BJ (cell line): ENCODE measurements at regions of chr1 and their contacts with region 1.

Region 1: GRCh38 chr1:87927391-87928280 is 599.0 kb downstream of the LMO4 start:
- DNase-seq: no peak
- H3K4me3 ChIP-seq: no peak overlapping the region
- H3K27me3 ChIP-seq: no peaks in the 10 kb centered on the region
- CTCF ChIP-seq: no peak

Region 2: GRCh38 chr1:87916965-87917364 is 10.7 kb before region 1 on chr1:
- CTCF ChIA-PET with region 1: interaction called, 11 read pairs
- POLR2A ChIA-PET with region 1: interaction called, 7 read pairs
- DNase-seq: no peak
- H3K4me3 ChIP-seq: no peak overlapping the region
- H3K27me3 ChIP-seq: no peaks in the 10 kb centered on the region
- CTCF ChIP-seq: no peak